Activated CD4-positive, alpha-beta T cell treated with anti-CD3 and anti-CD28 coated beads for 36 hours (primary cell): ENCODE measurements at regions of chr10 and their contacts with region 1.

Region 1: DNA sequence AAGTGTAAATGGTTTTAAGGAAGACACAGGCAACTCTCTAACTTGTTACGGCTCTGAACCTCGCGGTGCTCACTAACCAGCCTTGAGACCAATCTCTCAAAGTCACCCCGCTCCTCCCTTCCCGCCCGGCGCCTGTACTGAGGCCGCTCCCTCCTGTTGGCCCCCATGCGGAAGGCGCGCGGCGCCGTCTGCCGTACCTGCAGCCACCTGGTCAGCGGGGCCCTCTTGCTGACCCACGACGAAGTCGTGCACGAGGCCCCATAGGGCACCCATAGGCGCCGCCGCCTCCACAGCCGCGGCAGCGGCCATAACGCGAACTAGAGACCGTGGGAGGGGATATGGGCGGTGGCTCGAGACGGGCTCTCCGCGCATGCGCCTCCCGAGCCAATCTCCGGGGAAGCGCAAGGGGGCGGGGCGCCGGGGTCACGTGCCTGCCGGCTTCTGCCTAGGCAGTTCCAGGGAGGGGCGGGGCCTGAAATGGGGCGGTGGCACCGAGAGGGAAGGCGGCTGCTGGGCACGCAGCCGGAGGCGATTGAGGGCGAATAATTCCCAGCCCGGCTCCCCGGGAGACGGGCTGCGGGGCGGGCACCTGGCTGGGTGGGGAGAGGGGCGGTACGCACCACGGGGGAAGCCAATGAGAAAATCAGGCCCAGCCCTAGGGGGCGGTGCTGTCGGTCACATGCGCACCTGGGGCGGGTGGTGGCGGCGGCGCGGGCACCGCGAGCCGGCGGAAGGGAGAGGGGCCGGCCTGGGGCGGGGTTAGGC is at the start of gene MMS19:
- DNase-seq: peak; percentile 100
- ATAC-seq: peak; percentile 91
- H3K4me3 Mint-ChIP-seq: peak within 1 kb of the TSS; percentile 87
- H3K27ac Mint-ChIP-seq: peak within 1 kb of the TSS; percentile 97
- H3K4me1 Mint-ChIP-seq: peaks cover 38% of the 10 kb centered on the region
- H3K27me3 Mint-ChIP-seq: peaks cover 20% of the 10 kb centered on the region
- total RNA-seq, gene MMS19: 91.3 to 107 TPM

Region 2: DNA sequence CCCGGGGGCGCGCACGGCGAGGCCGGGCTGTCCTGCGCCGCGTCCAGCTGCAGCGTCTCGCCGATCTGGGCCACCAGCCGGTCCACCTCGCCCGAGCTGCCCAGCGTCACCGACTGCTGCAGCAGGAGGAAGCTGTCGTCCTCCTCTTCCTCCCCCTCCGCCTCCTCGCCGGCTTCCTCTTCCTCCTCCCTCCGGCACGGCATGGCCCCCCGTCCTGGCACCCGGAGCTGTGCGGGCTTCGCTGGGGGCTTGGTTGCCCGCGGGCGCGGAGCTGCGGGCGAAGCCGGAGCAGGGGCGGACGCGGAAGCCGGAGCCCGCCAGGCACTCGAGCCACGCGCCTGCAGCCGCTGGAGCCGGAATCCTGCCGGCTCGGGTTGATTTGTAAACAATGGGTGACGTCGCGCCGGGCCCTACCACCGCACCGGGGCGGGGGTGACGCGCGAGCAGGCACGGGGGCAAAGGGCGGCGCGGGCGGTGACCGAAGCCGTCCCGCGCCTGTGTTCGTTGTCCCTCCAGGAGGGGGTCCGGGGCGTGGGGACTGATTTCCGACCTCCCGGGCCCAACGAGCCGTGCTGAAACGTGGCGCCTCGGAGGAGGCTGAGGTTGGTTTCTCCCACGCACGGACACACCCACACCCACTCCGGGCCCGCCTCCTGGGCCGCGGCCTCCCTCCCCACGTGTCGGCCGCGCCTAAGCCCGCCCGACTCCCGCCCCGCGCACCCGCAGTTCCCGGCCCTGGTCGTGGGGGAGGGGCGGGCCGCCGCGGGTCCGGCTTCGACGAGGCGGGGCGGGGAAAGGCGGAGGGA is 163.7 kb before region 1 on chr10 and contains the start of gene FRAT2:
- CTCF ChIA-PET with region 1: no interaction called
- POLR2A ChIA-PET with region 1: no interaction called
- intact Hi-C with region 1: loop called in 1 of 2 experiments (anchors 1 kb)
- DNase-seq: peak; percentile 91
- ATAC-seq: peak; percentile 85
- H3K4me3 Mint-ChIP-seq: peak within 1 kb of the TSS; percentile 83
- H3K27ac Mint-ChIP-seq: peak within 1 kb of the TSS; percentile 86
- H3K4me1 Mint-ChIP-seq: peaks cover 40% of the 10 kb centered on the region
- H3K27me3 Mint-ChIP-seq: no peaks in the 10 kb centered on the region
- total RNA-seq, gene FRAT2: 3.0 to 4.3 TPM

Region 3: DNA sequence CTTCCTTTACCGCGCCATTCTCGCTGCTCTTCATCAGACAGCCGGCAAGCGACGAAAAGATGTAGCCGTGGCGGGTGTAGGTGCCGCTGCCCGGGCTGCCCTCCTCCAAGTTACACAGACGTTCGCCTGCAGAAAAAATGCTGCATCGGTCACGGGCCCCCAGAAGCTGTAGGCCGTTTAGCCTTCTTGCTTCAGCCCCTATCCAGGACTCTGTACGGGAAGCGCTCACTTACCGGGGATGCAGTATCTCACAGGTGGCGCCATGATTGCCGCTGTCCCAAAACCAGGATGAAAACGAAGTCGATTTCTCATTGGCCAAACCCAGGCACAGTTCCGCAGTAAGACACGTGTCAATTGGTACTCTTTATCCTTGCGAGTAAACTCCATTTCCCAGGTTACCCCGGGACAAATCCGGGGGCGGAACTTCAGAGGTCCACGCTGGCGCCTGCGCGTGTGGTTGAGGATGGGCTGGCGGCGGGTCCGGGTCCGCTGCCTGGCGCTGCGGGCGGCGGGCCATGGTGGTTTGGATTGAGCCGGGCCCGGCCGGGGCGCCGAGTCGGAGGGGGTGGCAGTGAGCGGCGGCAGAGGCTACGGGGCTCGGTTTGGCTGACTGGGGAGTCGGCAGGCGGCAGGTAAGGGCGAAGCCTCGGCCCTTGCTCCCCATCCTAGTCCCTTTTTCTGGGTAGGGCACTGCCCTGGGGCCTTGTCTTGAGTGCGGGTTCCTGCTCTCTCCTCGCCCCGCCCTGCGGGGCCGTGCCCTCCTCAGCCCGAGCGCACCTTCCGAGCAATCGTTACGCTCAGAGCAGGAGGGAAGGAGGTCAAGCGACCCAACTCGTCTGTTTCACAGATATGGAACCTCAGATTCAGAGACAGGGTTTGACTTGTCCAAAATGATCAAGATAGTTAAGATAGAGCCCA is 52.3 kb before region 1 on chr10 and contains the starts of genes EXOSC1 and ZDHHC16:
- CTCF ChIA-PET with region 1: interaction called, 3 read pairs
- POLR2A ChIA-PET with region 1: no interaction called
- intact Hi-C with region 1: loop called (anchors 1 kb)
- DNase-seq: peak; percentile 96
- ATAC-seq: peak; percentile 91
- H3K4me3 Mint-ChIP-seq: peak within 1 kb of the TSS; percentile 86
- H3K27ac Mint-ChIP-seq: peak within 1 kb of the TSS; percentile 90
- H3K4me1 Mint-ChIP-seq: peaks cover 55% of the 10 kb centered on the region
- H3K27me3 Mint-ChIP-seq: no peaks in the 10 kb centered on the region
- total RNA-seq, gene EXOSC1: 52.3 to 54.2 TPM
- total RNA-seq, gene ZDHHC16: 34.6 to 42.8 TPM

Region 4: GRCh38 chr10:97640174-97640867 is 142.1 kb after region 1 on chr10 and contains the start of gene PI4K2A:
- CTCF ChIA-PET with region 1: no interaction called
- POLR2A ChIA-PET with region 1: no interaction called
- intact Hi-C with region 1: loop called (anchors 1 to 2 kb)
- DNase-seq: peak; percentile 100
- ATAC-seq: peak; percentile 99
- H3K4me3 Mint-ChIP-seq: peak within 1 kb of the TSS; percentile 97
- H3K27ac Mint-ChIP-seq: peak within 1 kb of the TSS; percentile 93
- H3K4me1 Mint-ChIP-seq: peaks cover 18% of the 10 kb centered on the region
- H3K27me3 Mint-ChIP-seq: no peaks in the 10 kb centered on the region
- total RNA-seq, gene PI4K2A: 8.5 to 8.9 TPM

Region 5: DNA sequence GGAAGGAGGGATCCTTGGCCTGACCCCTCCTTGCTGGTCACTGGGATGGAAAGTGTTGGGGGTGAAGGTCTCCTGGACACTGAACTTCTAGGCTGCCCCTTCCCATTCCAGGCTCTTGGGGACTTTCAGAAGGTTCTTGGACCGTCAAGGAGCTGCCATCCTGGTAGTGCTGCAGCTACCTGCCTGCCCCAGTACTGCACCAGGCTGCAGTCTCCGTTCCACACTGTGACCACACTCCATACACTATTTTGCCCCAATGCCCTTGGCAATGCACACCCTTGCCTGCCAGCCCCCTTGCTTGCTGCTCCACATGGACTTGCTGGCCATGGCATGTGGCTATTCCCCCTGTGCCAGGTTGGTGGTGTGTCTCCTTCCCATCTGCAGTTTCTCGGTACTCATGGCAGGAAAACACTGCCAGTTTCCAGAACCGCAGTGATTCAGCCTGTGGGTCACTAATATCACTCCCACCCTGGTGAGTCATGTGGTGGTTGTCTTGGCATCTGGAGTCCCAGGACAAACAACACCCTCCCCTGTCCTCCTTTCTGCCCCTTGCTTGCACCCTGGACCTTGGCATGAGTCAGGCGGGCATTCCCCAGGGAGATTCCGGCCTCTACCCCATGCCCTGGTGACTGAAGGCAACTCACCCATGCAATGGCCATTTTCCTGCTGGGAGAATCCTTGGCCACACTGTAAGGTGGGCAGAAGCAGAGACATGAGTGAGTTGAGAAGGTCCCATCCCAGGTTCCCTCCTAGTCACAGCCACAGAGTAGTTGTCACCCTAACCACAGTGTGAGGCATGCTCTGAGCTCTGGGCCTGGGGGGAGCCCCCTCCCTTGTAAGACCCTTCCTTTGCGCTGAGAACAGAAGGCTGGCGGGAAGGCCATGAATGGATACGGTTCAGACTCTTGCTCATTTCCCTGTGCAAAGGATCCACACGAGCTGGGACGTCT is 384.2 kb after region 1 on chr10:
- CTCF ChIA-PET with region 1: no interaction called
- POLR2A ChIA-PET with region 1: no interaction called
- intact Hi-C with region 1: no loop called
- DNase-seq: no peak
- ATAC-seq: peak; percentile 77
- H3K4me3 Mint-ChIP-seq: no peak overlapping the region
- H3K27ac Mint-ChIP-seq: no peak overlapping the region
- H3K4me1 Mint-ChIP-seq: no peaks in the 10 kb centered on the region
- H3K27me3 Mint-ChIP-seq: no peaks in the 10 kb centered on the region

Region 6: DNA sequence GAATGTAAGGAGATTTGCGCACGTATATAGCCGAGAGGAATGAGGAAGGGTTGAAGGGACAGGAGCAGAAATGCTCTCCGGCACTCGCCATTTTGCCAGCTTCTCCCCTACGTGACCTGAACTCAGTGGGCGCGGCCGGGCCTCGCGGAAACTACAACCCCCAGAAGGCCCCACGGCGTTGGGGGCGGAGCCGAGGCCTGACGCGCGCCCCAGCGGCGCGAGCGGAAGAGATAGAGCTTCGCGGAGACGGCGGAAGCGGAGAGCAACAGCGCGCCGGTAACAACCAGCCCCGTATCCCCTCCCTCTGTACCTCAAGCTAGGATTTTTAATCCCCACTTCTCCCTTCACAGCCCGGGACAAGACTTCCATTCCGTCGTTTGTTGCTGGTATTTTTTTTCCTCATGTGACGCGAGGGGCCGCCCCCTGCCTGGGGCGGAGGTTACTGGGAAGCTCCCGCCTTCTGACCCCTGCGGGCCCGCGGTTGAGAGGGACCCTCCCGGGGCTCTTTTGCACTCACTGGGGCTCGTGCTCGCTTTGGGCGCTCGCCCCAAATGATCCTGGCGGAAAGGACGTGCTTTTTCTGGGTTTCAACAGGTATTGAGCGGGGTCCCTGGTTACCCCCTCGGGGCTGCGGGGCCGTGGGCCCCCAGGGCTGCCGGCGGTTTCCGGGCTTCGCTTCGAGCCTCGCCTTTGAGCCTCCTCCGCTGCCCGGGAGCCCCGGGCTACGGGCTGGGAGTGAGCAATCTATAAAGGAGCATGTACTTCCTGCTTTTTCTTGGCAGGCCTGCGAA is 636.4 kb after region 1 on chr10 and contains the start of gene R3HCC1L:
- CTCF ChIA-PET with region 1: no interaction called
- POLR2A ChIA-PET with region 1: no interaction called
- intact Hi-C with region 1: loop called in 1 of 2 experiments (anchors 1 kb)
- DNase-seq: peak; percentile 97
- ATAC-seq: peak; percentile 95
- H3K4me3 Mint-ChIP-seq: peak within 1 kb of the TSS; percentile 86
- H3K27ac Mint-ChIP-seq: peak within 1 kb of the TSS; percentile 93
- H3K4me1 Mint-ChIP-seq: peaks cover 44% of the 10 kb centered on the region
- H3K27me3 Mint-ChIP-seq: no peaks in the 10 kb centered on the region
- total RNA-seq, gene R3HCC1L: 13.5 to 16.8 TPM